ENCODE measurements at regions of chr15 and their contacts with region 1.

Region 1: DNA sequence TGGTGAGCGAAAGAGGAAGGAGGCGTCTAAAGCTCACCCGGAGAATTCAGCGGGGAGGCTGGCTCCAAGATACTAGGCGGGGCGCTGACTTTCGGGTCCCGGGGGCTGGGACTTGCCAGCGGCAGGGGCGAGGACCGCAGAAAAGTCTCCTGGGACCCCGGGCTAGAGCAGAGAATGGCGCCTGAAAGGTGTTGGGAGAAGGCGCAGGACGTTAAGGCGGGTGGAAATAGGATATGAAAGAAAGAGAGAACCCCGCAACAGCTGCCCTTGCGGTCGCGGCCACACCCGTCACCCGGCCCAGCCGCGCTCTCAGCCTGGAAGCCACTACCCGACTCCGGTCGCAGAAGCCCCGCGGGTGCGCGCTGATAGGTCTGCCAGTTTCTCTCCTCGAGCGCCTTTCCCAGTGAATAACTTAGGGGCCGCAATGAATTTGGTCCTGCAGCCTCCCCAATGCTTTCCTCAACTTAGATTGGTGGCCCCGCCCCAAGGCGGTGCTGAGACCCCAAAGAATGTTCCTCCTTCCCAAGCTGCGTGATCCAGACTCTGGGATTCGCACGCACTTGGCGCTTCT is 602 bp downstream of the LTK start:
- DNase-seq: peak; percentile 52
- ATAC-seq: peak; percentile 79
- H3K4me3 Mint-ChIP-seq: peak overlapping the region; percentile 85
- H3K27ac Mint-ChIP-seq: peak overlapping the region; percentile 41
- H3K4me1 Mint-ChIP-seq: peaks cover 24% of the 10 kb centered on the region
- H3K27me3 Mint-ChIP-seq: peaks cover 5% of the 10 kb centered on the region
- CTCF ChIP-seq: no peak

Region 2: DNA sequence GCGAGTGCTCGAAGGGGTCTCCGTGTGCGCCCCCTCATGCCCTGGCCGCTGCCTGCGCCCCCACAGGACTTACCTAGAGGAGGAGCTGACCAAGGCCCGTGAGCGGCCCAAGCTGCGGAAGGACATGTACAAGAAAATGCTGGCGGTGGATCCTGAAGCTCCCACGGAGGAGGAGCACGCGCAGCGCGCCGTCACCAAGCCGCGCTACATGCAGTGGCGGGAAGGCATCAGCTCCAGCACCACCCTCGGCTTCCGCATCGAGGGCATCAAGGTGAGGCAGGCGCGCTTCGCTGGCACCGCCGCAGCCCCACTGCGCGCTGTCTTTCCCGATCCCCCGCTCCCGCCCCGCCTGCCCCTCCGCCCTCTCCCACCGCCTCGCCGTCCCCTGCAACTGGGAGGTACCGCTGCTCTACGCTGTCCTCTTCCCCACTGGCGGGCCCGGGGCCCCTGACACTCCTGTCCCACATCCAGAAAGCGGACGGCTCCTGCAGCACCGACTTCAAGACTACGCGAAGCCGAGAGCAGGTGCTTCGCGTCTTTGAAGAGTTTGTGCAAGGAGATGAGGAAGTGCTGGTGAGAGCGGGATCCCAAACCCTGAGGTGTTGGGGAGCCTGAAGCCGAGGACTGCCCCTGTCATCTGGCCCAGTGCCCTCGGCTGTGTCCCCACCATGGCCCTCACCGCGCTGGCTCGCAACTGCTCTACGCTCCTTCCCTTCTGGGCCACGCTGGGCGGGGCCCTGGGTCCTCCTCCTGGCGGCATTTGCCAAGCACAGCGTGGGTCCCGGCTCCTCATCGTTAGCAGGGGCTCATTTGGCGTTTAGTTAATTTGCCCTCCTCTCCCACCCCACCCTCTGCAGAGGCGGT is 10.9 kb before region 1 on chr15:
- CTCF ChIA-PET with region 1: no interaction called
- POLR2A ChIA-PET with region 1: interaction called, 4 read pairs
- intact Hi-C with region 1: loop called (anchors 1 kb)
- DNase-seq: peak; percentile 35
- ATAC-seq: peak; percentile 40
- H3K4me3 Mint-ChIP-seq: peak overlapping the region; percentile 81
- H3K27ac Mint-ChIP-seq: no peak overlapping the region
- H3K4me1 Mint-ChIP-seq: peaks cover 38% of the 10 kb centered on the region
- H3K27me3 Mint-ChIP-seq: peaks cover 22% of the 10 kb centered on the region
- CTCF ChIP-seq: no peak

Region 3: DNA sequence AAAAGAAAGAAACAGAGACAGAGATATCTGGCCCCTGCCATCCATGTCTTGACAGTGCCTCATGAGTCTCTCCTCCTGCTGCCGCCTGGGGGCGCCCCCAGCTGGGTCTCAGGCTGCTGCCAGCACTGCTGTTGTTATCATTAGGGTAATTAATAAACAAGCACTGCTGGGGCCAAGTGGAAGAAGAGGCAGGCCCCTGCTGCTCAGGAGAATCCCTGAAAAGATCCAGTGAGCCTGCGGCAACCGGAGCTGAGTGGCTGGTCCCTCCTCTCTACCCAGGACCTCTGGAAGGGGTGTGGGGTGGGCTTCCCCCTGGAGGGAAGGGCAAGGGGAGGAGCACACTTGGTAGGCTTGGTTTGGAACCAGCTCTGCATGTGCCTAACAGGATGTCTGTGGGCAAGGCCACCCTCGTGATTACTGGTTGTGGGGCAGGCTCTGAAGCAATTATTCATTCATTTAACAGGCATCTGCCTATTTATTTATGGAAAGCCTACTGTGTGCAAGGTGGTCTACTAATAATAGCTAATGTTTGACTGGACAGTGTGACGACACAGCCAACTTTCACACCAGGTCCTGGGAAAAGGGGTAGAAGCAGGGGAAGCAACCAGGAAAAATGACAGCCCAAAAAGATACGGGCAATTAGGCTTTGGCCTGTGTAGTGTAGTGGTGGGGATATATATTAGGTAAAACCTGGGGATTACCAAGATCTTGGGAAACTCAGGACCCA is 44.8 kb after region 1 on chr15:
- CTCF ChIA-PET with region 1: no interaction called
- POLR2A ChIA-PET with region 1: no interaction called
- intact Hi-C with region 1: loop called (anchors 1 kb)
- DNase-seq: peak; percentile 39
- ATAC-seq: peak; percentile 73
- H3K4me3 Mint-ChIP-seq: peak overlapping the region; percentile 90
- H3K27ac Mint-ChIP-seq: peak overlapping the region; percentile 59
- H3K4me1 Mint-ChIP-seq: peaks cover 26% of the 10 kb centered on the region
- H3K27me3 Mint-ChIP-seq: peaks cover 40% of the 10 kb centered on the region
- CTCF ChIP-seq: no peak